ENCODE measurements at regions of chr1 and their contacts with region 1.

Region 1: DNA sequence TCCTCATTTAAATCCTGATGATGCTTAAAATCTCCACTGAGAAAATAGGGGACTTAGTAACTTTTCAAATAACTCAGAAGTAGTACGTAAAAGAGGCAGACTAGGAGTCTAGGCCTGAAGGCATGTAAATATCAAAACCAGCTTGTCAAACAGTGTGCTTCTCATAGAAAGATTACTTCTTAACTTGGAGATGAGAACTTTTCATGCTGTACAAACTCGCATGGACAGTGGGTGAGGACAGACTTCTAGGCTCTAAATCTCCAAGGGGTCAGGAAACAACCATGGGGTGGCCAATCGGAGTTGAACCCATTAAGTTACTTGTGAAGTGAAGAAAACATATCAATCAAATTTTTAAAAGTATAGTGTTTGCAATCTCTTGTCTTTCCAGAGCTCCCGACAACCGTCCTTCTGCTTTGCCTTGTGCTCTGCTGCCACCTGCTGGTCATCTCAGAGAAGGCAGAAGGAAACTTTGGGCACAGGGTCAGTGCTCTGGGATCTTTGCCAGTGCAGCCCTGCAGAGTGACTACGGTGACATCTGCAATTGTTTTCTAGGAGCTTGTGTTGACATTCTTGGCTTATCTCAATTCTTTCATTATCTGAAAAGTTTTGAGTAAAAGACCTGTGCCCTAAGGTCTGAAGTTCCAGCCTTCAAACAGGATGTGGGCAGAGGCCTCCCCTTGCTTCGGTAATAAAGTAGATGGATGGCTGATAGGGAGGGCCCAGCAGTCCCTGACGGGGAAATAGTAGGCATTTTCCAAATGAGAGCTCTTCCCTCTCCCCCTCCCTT is 105.1 kb upstream of the PDE4B start:
- DNase-seq: peak; percentile 84 to 97
- H3K4me3 ChIP-seq: no peak overlapping the region
- CTCF ChIP-seq: peak in 1 of 3 donors; percentile 83
- POLR2A ChIP-seq: no peak

Region 2: GRCh38 chr1:65059930-65060538 is 627.6 kb before region 1 on chr1:
- intact Hi-C with region 1: loop called (anchors 5 kb)
- DNase-seq: no peak
- H3K4me3 ChIP-seq: no peak overlapping the region
- CTCF ChIP-seq: peak in 1 of 3 donors; percentile 24
- POLR2A ChIP-seq: no peak

Region 3: DNA sequence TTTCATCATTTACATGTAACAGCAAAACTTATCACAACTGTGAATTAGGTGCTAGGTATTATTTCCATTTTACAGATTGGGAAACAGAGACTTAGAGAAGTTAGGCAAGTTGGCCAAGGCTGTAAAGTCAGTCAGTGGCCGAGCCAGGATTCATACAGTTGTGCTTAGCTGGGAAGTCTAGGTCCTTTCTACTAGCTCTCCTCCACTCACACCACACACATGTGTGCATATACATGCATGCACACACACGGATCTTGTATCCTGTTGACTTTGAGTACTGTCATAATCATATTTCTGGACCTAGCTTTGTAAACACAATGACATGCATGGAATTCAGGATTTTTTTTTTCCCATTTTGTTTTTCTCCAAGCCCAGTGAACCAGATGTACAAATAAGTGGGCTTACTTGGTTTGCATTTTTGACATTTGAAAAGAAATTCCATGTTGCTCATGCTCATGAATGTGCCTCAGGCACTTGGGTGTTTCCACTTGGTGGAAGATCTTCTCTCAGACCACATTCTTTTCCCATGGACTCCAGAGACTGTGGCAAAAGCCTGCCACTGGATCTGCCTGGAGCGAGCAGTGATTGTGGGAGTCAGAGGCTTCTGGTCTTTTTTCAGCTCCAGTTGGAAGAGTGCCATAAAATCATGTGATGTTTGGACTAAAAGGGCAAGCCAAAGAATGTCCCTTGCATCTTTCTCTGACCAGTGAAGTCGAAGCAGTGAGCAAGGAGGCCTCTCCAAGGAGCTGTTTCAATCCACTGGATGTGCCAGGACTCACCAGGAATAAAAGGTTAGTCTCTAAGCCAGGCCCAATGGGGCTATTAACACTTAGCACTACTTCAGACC is 439.9 kb before region 1 on chr1:
- intact Hi-C with region 1: loop called (anchors 10 kb)
- DNase-seq: peak in 1 of 2 donors; percentile 40
- H3K4me3 ChIP-seq: no peak overlapping the region
- CTCF ChIP-seq: no peak
- POLR2A ChIP-seq: no peak

Region 4: GRCh38 chr1:65632235-65632634 is 55.4 kb before region 1 on chr1:
- intact Hi-C with region 1: no loop called
- DNase-seq: no peak
- H3K4me3 ChIP-seq: no peak overlapping the region
- CTCF ChIP-seq: no peak
- POLR2A ChIP-seq: no peak